ENCODE measurements at regions of chr16 and their contacts with region 1.

Region 1: GRCh38 chr16:21656795-21657768 is 4.7 kb upstream of the IGSF6 start:
- DNase-seq: peak; percentile 56
- H3K4me3 Mint-ChIP-seq: no peak overlapping the region
- H3K27ac Mint-ChIP-seq: peak overlapping the region; percentile 7
- H3K4me1 Mint-ChIP-seq: peaks cover 50% of the 10 kb centered on the region
- H3K27me3 Mint-ChIP-seq: no peaks in the 10 kb centered on the region

Region 2: GRCh38 chr16:21584817-21585216 is 72.3 kb before region 1 on chr16:
- CTCF ChIA-PET with region 1: interaction called, 13 read pairs
- DNase-seq: no peak
- H3K4me3 Mint-ChIP-seq: no peak overlapping the region
- H3K27ac Mint-ChIP-seq: no peak overlapping the region
- H3K4me1 Mint-ChIP-seq: peaks cover 5% of the 10 kb centered on the region
- H3K27me3 Mint-ChIP-seq: peaks cover 14% of the 10 kb centered on the region

Region 3: GRCh38 chr16:21638573-21638975 is 18.5 kb before region 1 on chr16:
- CTCF ChIA-PET with region 1: interaction called, 26 read pairs
- DNase-seq: no peak
- H3K4me3 Mint-ChIP-seq: no peak overlapping the region
- H3K27ac Mint-ChIP-seq: peak overlapping the region; percentile 9
- H3K4me1 Mint-ChIP-seq: peaks cover 20% of the 10 kb centered on the region
- H3K27me3 Mint-ChIP-seq: no peaks in the 10 kb centered on the region

Region 4: GRCh38 chr16:21646721-21647561 is 10.1 kb before region 1 on chr16:
- CTCF ChIA-PET with region 1: interaction called, 26 read pairs
- DNase-seq: peak; percentile 88
- H3K4me3 Mint-ChIP-seq: peak overlapping the region; percentile 73
- H3K27ac Mint-ChIP-seq: peak overlapping the region; percentile 95
- H3K4me1 Mint-ChIP-seq: peaks cover 60% of the 10 kb centered on the region
- H3K27me3 Mint-ChIP-seq: no peaks in the 10 kb centered on the region

Region 5: DNA sequence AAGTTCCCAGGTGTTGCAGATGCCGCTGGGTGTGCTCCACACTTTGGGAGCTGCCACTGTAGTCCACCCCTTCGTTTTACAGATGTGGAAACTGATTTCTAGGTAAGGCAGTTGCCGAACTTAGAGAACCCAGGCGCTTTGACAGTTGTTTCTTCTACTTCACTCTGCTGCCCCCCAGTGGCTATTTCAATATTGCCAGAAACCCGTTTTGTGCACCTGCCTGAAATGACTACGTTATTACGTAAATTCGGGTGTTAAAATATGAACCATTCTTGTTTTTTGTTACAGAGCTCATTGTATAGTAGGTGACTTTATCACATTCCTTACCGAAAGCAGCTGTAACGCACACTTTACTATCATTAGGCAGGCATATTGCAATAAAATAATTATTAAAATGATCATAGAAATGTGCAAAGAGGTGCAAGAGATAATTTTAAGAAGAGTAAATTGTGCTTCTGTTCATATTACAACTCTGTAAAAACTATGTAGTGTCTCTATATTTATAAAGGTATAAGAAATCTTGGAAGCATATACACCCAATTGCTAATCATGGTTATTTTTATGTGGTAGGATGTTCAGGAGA is 51.5 kb after region 1 on chr16:
- CTCF ChIA-PET with region 1: interaction called, 59 read pairs
- DNase-seq: peak; percentile 89
- H3K4me3 Mint-ChIP-seq: no peak overlapping the region
- H3K27ac Mint-ChIP-seq: no peak overlapping the region
- H3K4me1 Mint-ChIP-seq: peaks cover 5% of the 10 kb centered on the region
- H3K27me3 Mint-ChIP-seq: peaks cover 24% of the 10 kb centered on the region

Region 6: GRCh38 chr16:21713549-21714368 is 56.7 kb after region 1 on chr16:
- CTCF ChIA-PET with region 1: interaction called, 59 read pairs
- DNase-seq: no peak
- H3K4me3 Mint-ChIP-seq: no peak overlapping the region
- H3K27ac Mint-ChIP-seq: no peak overlapping the region
- H3K4me1 Mint-ChIP-seq: peaks cover 9% of the 10 kb centered on the region
- H3K27me3 Mint-ChIP-seq: peaks cover 22% of the 10 kb centered on the region